Prostate gland (tissue), 2 donors: ENCODE measurements at regions of chr19 and their contacts with region 1.

Region 1: GRCh38 chr19:35740423-35741202 is 1.6 kb downstream of the IGFLR1 start:
- DNase-seq: peak; percentile 97
- H3K4me3 ChIP-seq: peak overlapping the region; percentile 39 to 54
- H3K27ac ChIP-seq: peak overlapping the region; percentile 68 to 72
- H3K4me1 ChIP-seq: peaks cover 3% of the 10 kb centered on the region
- H3K27me3 ChIP-seq: no peaks in the 10 kb centered on the region
- CTCF ChIP-seq: no peak
- POLR2A ChIP-seq: peak; percentile 19

Region 2: GRCh38 chr19:35783469-35784434 is 43.1 kb after region 1 on chr19:
- intact Hi-C with region 1: no loop called
- DNase-seq: no peak
- H3K4me3 ChIP-seq: no peak overlapping the region
- H3K27ac ChIP-seq: no peak overlapping the region
- H3K4me1 ChIP-seq: no peaks in the 10 kb centered on the region
- H3K27me3 ChIP-seq: no peaks in the 10 kb centered on the region
- CTCF ChIP-seq: no peak
- POLR2A ChIP-seq: no peak

Region 3: GRCh38 chr19:35797663-35798062 is 57.0 kb after region 1 on chr19:
- intact Hi-C with region 1: no loop called
- DNase-seq: no peak
- H3K4me3 ChIP-seq: no peak overlapping the region
- H3K27ac ChIP-seq: no peak overlapping the region
- H3K4me1 ChIP-seq: peaks cover 2% of the 10 kb centered on the region
- H3K27me3 ChIP-seq: peaks cover 12% of the 10 kb centered on the region
- CTCF ChIP-seq: no peak
- POLR2A ChIP-seq: no peak

Region 4: GRCh38 chr19:36214386-36215275 is 474.0 kb after region 1 on chr19 and contains the starts of genes ZNF146 and ZNF565:
- intact Hi-C with region 1: loop called (anchors 10 kb)
- DNase-seq: peak; percentile 97
- H3K4me3 ChIP-seq: peak within 1 kb of the TSS; percentile 82 to 84
- H3K27ac ChIP-seq: peak within 1 kb of the TSS; percentile 98
- H3K4me1 ChIP-seq: no peaks in the 10 kb centered on the region
- H3K27me3 ChIP-seq: no peaks in the 10 kb centered on the region
- CTCF ChIP-seq: peak in 2 of 4 experiments; percentile 44 to 51
- POLR2A ChIP-seq: peak; percentile 68
- total RNA-seq, gene ZNF146: 46.9 to 83.6 TPM
- total RNA-seq, gene ZNF565: 3.6 to 6.4 TPM